WTC11 (cell line): ENCODE measurements at regions of chr2 and their contacts with region 1.

Region 1: GRCh38 chr2:165874445-165875039 is 79.0 kb downstream of the TTC21B start:
- DNase-seq: no peak
- ATAC-seq: peak; percentile 95
- H3K4me3 Mint-ChIP-seq: no peak overlapping the region
- H3K27ac Mint-ChIP-seq: no peak overlapping the region; the same call in 1 of the 2 replicates
- H3K4me1 Mint-ChIP-seq: peaks cover 6% of the 10 kb centered on the region; the same call in 1 of the 2 replicates
- H3K27me3 Mint-ChIP-seq: no peaks in the 10 kb centered on the region
- CTCF ChIP-seq: no peak

Region 2: GRCh38 chr2:165203689-165204559 is 670.6 kb before region 1 on chr2 and contains the start of gene SCN3A:
- CTCF ChIA-PET with region 1: interaction called, 15 read pairs
- POLR2A ChIA-PET with region 1: no interaction called
- DNase-seq: peak; percentile 17
- ATAC-seq: peak; percentile 86
- H3K4me3 Mint-ChIP-seq: no peak within 1 kb of the TSS
- H3K27ac Mint-ChIP-seq: no peak within 1 kb of the TSS
- H3K4me1 Mint-ChIP-seq: peaks cover 4% of the 10 kb centered on the region
- H3K27me3 Mint-ChIP-seq: no peaks in the 10 kb centered on the region
- CTCF ChIP-seq: peak; percentile 48
- total RNA-seq, gene SCN3A: 0.04 TPM in 1 of 3 replicates, not detected in the others

Region 3: GRCh38 chr2:165573534-165574461 is 300.7 kb before region 1 on chr2:
- CTCF ChIA-PET with region 1: interaction called, 11 read pairs
- POLR2A ChIA-PET with region 1: no interaction called
- DNase-seq: peak; percentile 74
- ATAC-seq: peak; percentile 100
- H3K4me3 Mint-ChIP-seq: peak overlapping the region; percentile 61
- H3K27ac Mint-ChIP-seq: peak overlapping the region; percentile 38
- H3K4me1 Mint-ChIP-seq: peaks cover 34% of the 10 kb centered on the region
- H3K27me3 Mint-ChIP-seq: no peaks in the 10 kb centered on the region
- CTCF ChIP-seq: no peak

Region 4: GRCh38 chr2:165698444-165698894 is 176.1 kb before region 1 on chr2:
- CTCF ChIA-PET with region 1: interaction called, 17 read pairs
- POLR2A ChIA-PET with region 1: no interaction called
- DNase-seq: peak; percentile 37
- ATAC-seq: peak; percentile 81
- H3K4me3 Mint-ChIP-seq: peak overlapping the region; percentile 18; the same call in 1 of the 2 replicates
- H3K27ac Mint-ChIP-seq: peak overlapping the region; percentile 92
- H3K4me1 Mint-ChIP-seq: peaks cover 62% of the 10 kb centered on the region
- H3K27me3 Mint-ChIP-seq: no peaks in the 10 kb centered on the region
- CTCF ChIP-seq: 0 out of 2 replicates have a peak, but pooled peaks have one; percentile 9

Region 5: DNA sequence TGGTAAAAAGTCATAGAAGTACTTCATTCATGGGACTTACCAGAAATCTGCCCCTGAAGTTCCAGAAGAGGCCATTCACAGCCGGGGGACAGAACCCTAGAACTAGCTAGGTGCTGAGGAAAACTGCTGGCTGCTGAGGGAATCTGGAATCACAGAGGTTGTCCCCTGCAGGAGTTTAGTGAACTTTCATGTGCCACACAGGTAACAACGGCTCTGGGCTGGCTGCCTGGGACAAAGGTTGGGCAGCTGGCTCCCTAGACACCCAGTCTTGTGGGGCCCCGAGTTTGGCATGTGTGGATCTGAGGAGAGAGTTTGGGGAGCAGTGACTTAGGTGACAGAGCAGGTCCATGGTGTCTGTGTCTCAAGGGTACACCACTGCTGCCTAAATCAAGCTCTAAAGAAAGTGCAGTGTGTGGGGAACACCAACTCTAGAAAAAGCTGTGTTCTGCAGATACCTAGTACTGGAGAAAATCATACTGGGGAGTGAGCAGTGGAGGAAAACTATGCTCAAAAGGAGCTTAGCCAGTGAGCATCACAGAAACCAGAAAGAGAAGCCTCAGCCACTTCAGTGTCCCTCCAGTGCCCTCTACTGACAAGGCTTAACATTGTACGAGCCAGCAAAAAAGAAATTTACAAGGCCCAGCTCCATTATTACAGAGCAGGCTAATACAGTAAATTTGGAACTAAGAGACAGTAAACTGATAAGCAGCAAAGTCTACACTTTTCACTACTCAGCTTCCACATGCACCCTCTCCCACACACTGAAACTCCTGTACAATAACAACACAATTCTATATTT is 95.7 kb before region 1 on chr2:
- CTCF ChIA-PET with region 1: interaction called, 44 read pairs
- POLR2A ChIA-PET with region 1: interaction called, 4 read pairs
- DNase-seq: peak; percentile 17
- ATAC-seq: peak; percentile 86
- H3K4me3 Mint-ChIP-seq: no peak overlapping the region
- H3K27ac Mint-ChIP-seq: peak overlapping the region; percentile 32
- H3K4me1 Mint-ChIP-seq: peaks cover 39% of the 10 kb centered on the region
- H3K27me3 Mint-ChIP-seq: no peaks in the 10 kb centered on the region
- CTCF ChIP-seq: peak; percentile 45; the same call in 1 of the 2 replicates

Region 6: DNA sequence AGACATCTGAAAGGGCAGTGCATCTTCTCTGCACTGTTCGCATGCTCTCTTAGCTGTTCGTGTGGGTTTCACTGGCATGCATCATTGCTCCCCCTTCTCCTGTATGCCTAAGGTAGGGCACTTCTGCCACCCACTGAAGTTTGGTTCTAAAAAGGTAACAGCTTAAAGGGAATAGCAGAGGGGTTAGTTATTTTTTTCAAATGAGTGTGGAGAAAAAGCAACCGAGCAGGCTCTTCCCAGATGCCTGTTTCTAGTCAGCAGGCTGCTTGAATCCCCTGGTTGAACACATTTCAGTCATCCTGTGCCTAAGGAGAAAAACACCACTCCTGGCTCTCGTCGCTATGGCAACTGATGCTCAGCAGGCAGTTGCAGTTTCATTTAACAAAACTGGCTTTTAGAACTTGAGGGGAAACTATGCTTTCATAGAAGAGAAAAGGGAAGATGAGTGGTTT is 10.7 kb before region 1 on chr2:
- CTCF ChIA-PET with region 1: interaction called, 19 read pairs
- POLR2A ChIA-PET with region 1: no interaction called
- DNase-seq: no peak
- ATAC-seq: no peak
- H3K4me3 Mint-ChIP-seq: no peak overlapping the region
- H3K27ac Mint-ChIP-seq: no peak overlapping the region
- H3K4me1 Mint-ChIP-seq: peaks cover 2% of the 10 kb centered on the region; the same call in 1 of the 2 replicates
- H3K27me3 Mint-ChIP-seq: no peaks in the 10 kb centered on the region
- CTCF ChIP-seq: no peak

Region 7: DNA sequence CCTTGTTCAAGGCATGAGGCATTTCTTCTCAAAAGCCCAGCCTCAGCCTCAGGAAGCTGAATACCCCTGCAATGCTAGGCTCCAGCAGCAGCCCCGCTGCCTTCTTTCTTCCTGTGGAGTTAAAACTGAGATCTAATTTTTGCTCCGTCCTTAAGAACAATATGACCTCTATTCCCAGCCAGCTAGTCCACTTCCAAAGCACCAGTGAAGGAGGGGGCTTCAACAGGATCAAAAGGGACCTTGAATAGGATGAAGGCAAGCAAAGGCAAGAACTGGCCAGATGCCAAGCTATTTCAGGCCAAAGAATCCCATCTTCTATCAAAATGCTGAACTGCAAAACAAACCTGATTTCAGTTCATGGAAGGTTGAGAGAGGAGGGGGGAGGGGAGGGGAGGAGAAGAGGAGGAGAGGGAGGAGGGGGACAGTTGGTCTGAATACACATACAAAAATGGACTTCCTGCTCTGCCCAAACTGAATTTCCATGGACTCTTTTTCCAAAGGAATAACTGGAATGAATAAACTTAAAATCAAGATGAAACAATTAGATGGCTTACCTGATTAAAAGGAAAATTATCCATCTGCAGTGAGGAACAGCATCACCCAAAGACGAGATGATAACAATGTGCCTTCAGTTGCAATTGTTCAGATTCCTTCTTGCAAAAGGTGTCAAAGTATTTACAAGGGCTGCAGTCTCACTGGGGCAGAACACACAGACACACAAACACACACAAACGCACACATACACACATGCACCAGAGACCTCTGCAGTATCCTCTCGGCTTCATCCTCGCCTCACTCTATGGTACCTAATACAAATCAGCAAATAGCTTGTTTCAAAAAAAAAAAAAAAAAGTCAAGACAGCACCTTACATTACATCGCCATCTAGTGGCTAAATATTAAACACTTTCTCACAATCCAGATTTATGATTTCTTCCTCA is 252.9 kb after region 1 on chr2 and contains the start of gene SCN1A:
- CTCF ChIA-PET with region 1: interaction called, 10 read pairs
- POLR2A ChIA-PET with region 1: no interaction called
- DNase-seq: no peak
- ATAC-seq: peak; percentile 56
- H3K4me3 Mint-ChIP-seq: peak within 1 kb of the TSS; percentile 39
- H3K27ac Mint-ChIP-seq: no peak within 1 kb of the TSS
- H3K4me1 Mint-ChIP-seq: peaks cover 34% of the 10 kb centered on the region
- H3K27me3 Mint-ChIP-seq: no peaks in the 10 kb centered on the region
- CTCF ChIP-seq: peak; percentile 56
- total RNA-seq, gene SCN1A: 0.62 to 1.6 TPM (median 1.0 TPM) in 3 replicates